ENCODE measurements at regions of chr12 and their contacts with region 1.

Region 1: GRCh38 chr12:6195665-6196535 is 4.3 kb upstream of the CD9 start:
- DNase-seq: peak; percentile 81
- H3K4me3 Mint-ChIP-seq: no peak overlapping the region
- H3K27ac Mint-ChIP-seq: no peak overlapping the region
- H3K4me1 Mint-ChIP-seq: peaks cover 6% of the 10 kb centered on the region
- H3K27me3 Mint-ChIP-seq: peaks cover 31% of the 10 kb centered on the region

Region 2: GRCh38 chr12:6062757-6063735 is 132.9 kb before region 1 on chr12:
- CTCF ChIA-PET with region 1: interaction called, 9 read pairs
- POLR2A ChIA-PET with region 1: no interaction called
- intact Hi-C with region 1: loop called (anchors 1 kb)
- DNase-seq: peak; percentile 66
- H3K4me3 Mint-ChIP-seq: no peak overlapping the region
- H3K27ac Mint-ChIP-seq: no peak overlapping the region
- H3K4me1 Mint-ChIP-seq: no peaks in the 10 kb centered on the region
- H3K27me3 Mint-ChIP-seq: peaks cover under 1% of the 10 kb centered on the region

Region 3: GRCh38 chr12:6167327-6168259 is 28.3 kb before region 1 on chr12:
- CTCF ChIA-PET with region 1: interaction called, 15 read pairs
- POLR2A ChIA-PET with region 1: no interaction called
- intact Hi-C with region 1: no loop called
- DNase-seq: peak; percentile 84
- H3K4me3 Mint-ChIP-seq: peak overlapping the region; percentile 28
- H3K27ac Mint-ChIP-seq: peak overlapping the region; percentile 87
- H3K4me1 Mint-ChIP-seq: peaks cover 24% of the 10 kb centered on the region
- H3K27me3 Mint-ChIP-seq: peaks cover 1% of the 10 kb centered on the region

Region 4: DNA sequence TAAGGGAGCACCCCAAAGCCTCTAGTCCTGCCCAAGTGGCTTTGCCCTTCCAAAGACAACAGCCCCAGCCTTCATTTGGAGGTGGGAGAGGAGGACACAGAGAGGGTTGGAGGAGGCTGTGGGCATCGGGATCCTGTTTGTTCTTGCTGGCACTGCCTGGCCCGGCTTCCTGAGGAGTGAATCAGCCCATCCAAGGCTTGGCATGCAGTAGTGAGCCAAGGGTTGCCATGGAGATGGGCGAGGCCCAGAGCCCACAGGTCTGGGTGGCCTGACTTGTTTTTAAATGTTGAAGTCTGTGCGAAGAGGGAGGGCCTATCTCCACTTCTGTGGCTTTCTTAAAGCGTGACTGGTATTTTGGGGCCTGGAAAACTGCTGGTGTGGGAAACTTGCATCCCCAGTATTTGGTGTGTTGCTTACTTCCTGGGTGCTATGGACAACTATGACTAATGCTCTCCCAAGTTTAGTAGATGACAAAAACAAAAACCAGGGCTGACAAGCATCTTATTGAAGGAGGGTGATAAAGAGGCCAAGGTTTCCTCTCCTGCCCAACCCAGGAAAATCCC is 20.1 kb after region 1 on chr12:
- CTCF ChIA-PET with region 1: interaction called, 26 read pairs
- POLR2A ChIA-PET with region 1: no interaction called
- intact Hi-C with region 1: no loop called
- DNase-seq: no peak
- H3K4me3 Mint-ChIP-seq: no peak overlapping the region
- H3K27ac Mint-ChIP-seq: no peak overlapping the region
- H3K4me1 Mint-ChIP-seq: peaks cover 13% of the 10 kb centered on the region
- H3K27me3 Mint-ChIP-seq: peaks cover 4% of the 10 kb centered on the region

Region 5: DNA sequence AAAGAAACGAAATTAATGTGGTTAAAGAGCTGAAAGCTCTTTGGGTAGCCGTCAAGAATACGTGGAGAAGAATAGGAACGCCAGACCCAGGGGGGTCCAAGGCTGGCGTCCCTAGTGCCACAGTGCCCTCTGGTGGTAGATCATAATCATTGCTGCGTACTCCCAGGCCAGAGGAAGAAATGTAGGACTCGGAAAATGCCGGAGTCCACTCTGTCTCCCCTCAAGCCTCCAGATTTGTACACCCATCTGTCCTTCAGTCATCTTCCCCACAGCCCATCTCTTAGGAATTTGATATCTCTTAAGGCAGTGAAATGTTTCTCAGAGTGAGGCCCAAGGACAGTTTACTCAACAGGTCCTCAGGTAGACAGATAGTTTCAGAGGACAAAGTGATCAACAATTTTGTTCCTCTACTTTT is 89.2 kb after region 1 on chr12:
- CTCF ChIA-PET with region 1: interaction called, 255 read pairs
- POLR2A ChIA-PET with region 1: no interaction called
- intact Hi-C with region 1: no loop called
- DNase-seq: peak; percentile 69
- H3K4me3 Mint-ChIP-seq: no peak overlapping the region
- H3K27ac Mint-ChIP-seq: peak overlapping the region; percentile 19
- H3K4me1 Mint-ChIP-seq: peaks cover 4% of the 10 kb centered on the region
- H3K27me3 Mint-ChIP-seq: peaks cover 19% of the 10 kb centered on the region

Measured in activated CD4-positive, alpha-beta memory T cell treated with anti-CD3 and anti-CD28 coated beads for 36 hours (primary cell).